ENCODE measurements at regions of chr3 and their contacts with region 1.

Region 1: GRCh38 chr3:150763122-150763841 is at the start of gene SIAH2:
- DNase-seq: peak; percentile 97
- H3K4me3 Mint-ChIP-seq: peak within 1 kb of the TSS; percentile 99
- H3K27ac Mint-ChIP-seq: peak within 1 kb of the TSS; percentile 100
- H3K4me1 Mint-ChIP-seq: peaks cover 51% of the 10 kb centered on the region
- H3K27me3 Mint-ChIP-seq: no peaks in the 10 kb centered on the region
- total RNA-seq, gene SIAH2: 130 and 133 TPM in 2 replicates

Region 2: DNA sequence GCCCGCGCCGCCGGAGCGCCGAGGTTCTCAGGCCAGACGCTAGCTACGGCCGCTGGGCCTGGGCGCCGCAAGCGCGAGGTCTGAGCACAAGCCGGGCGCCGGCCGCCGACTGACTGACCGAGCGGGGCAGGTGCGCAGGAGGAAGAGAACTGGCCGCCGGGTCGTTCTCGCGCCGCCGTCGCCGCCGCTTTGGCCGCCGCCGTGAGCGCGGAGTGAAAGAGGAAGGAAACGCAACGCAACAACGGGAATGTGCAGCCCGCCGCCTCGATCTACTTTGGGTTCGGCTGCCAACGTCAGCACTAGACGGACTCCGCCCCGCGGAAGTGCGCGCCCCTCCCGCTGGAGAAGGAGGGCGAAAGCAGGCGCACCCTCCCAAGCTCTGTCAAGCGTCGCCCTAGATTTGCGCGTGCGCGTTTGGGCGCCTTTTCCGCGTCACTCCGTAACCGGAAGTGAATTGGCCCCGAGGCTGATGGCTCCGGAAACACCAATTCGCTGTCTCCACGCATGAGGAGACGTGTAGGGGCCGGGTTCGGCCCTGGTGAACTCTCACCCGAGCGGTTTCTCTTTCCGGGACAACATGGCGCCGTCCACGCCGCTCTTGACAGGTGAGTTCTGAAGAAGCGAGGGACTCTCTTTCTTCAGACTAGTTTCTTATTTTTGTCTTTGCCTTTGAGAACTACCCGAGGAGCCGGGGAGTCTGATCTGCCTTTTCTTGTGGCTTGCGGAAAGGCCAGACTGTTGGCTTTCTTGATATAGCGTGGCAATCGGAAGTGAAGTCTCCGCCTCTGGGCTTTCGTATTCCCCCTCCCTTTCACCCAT is 216.8 kb before region 1 on chr3 and contains the starts of genes EIF2A and SERP1:
- intact Hi-C with region 1: loop called (anchors 1 kb)
- DNase-seq: peak; percentile 100
- H3K4me3 Mint-ChIP-seq: peak within 1 kb of the TSS; percentile 90
- H3K27ac Mint-ChIP-seq: peak within 1 kb of the TSS; percentile 95
- H3K4me1 Mint-ChIP-seq: peaks cover 51% of the 10 kb centered on the region
- H3K27me3 Mint-ChIP-seq: no peaks in the 10 kb centered on the region
- total RNA-seq, gene EIF2A: 125 and 133 TPM in 2 replicates
- total RNA-seq, gene SERP1: 88.8 and 103 TPM in 2 replicates

Region 3: GRCh38 chr3:150703299-150704134 is 59.8 kb before region 1 on chr3 and contains the start of gene ERICH6:
- intact Hi-C with region 1: loop called (anchors 1 kb)
- DNase-seq: peak; percentile 95
- H3K4me3 Mint-ChIP-seq: peak within 1 kb of the TSS; percentile 92
- H3K27ac Mint-ChIP-seq: peak within 1 kb of the TSS; percentile 99
- H3K4me1 Mint-ChIP-seq: peaks cover 28% of the 10 kb centered on the region
- H3K27me3 Mint-ChIP-seq: peaks cover 10% of the 10 kb centered on the region
- total RNA-seq, gene ERICH6: not detected in 2 replicates

Region 4: DNA sequence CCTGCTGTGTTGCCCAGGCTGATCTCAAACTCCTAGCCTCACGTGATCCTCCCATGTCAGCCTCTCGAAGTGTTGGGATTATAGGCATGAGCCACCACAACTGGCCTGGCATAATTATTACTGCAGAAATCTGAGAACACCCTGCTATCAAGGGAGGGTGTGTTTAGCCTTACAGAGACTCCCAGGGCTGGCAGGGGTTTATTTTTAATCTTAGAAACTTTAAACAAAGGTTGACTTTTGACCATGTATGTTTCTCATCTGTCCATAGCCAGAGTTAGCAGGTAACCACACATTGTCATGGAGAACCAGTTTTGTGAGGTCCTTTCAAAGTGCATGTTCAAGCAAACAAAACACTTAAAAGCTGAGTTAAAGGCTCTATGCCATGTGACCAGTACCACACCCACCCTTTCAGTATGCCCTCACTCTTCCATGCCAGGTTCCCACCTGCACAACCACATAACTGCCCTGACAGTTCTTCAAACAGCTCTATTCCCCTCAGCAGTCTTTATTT is 11.5 kb before region 1 on chr3:
- intact Hi-C with region 1: loop called (anchors 1 kb)
- DNase-seq: no peak
- H3K4me3 Mint-ChIP-seq: peak overlapping the region; percentile 30
- H3K27ac Mint-ChIP-seq: peak overlapping the region; percentile 85
- H3K4me1 Mint-ChIP-seq: peaks cover 71% of the 10 kb centered on the region
- H3K27me3 Mint-ChIP-seq: no peaks in the 10 kb centered on the region

Region 5: DNA sequence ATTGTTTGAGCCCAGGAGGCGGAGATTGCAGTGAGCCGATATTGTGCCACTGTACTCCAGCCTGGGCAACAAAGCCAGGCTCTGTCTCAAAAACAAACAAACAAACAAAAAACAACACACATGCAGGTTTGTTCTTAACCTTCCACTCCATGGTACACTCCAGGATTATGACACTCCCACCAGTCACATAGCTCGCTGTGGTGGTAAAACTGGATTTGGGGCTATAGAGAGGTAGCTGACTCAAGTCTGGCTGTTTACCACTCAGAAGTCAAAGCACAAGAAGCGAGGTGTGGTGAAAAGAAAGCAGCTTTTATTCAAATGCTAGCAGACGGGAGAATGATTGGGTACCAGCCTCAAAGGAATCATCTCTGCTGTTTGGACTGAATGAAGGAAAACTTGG is 48.7 kb after region 1 on chr3:
- intact Hi-C with region 1: no loop called
- DNase-seq: peak; percentile 48
- H3K4me3 Mint-ChIP-seq: no peak overlapping the region
- H3K27ac Mint-ChIP-seq: no peak overlapping the region
- H3K4me1 Mint-ChIP-seq: no peaks in the 10 kb centered on the region
- H3K27me3 Mint-ChIP-seq: peaks cover 18% of the 10 kb centered on the region

Region 6: DNA sequence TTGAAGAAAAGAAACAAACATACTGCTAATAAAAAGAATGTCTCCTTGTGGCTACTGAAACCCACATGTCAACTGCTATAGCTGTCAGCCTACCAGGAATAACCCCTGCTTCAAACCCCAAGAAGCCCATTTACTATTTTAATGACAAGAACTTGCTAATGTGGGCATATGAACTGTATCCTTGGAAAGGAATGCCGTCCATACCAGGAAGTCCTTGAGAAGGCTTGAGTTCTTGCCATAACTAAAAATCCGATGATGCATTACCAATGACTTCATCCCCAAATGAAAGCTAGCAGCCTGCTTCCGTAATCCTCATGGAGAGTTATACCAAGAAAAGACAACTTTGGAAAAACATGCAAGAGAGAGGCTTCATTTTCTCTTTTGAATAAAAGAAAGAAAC is 107.1 kb after region 1 on chr3:
- intact Hi-C with region 1: loop called (anchors 1 kb)
- DNase-seq: no peak
- H3K4me3 Mint-ChIP-seq: no peak overlapping the region
- H3K27ac Mint-ChIP-seq: no peak overlapping the region
- H3K4me1 Mint-ChIP-seq: peaks cover under 1% of the 10 kb centered on the region
- H3K27me3 Mint-ChIP-seq: peaks cover 12% of the 10 kb centered on the region

Region 7: GRCh38 chr3:152202976-152203626 is 1439.8 kb after region 1 on chr3:
- intact Hi-C with region 1: loop called (anchors 5 kb)
- DNase-seq: no peak
- H3K4me3 Mint-ChIP-seq: peak overlapping the region; percentile 78
- H3K27ac Mint-ChIP-seq: peak overlapping the region; percentile 87
- H3K4me1 Mint-ChIP-seq: peaks cover 60% of the 10 kb centered on the region
- H3K27me3 Mint-ChIP-seq: no peaks in the 10 kb centered on the region